Mammary epithelial cell (primary cell): ENCODE measurements at regions of chr4 and their contacts with region 1.

Region 1: DNA sequence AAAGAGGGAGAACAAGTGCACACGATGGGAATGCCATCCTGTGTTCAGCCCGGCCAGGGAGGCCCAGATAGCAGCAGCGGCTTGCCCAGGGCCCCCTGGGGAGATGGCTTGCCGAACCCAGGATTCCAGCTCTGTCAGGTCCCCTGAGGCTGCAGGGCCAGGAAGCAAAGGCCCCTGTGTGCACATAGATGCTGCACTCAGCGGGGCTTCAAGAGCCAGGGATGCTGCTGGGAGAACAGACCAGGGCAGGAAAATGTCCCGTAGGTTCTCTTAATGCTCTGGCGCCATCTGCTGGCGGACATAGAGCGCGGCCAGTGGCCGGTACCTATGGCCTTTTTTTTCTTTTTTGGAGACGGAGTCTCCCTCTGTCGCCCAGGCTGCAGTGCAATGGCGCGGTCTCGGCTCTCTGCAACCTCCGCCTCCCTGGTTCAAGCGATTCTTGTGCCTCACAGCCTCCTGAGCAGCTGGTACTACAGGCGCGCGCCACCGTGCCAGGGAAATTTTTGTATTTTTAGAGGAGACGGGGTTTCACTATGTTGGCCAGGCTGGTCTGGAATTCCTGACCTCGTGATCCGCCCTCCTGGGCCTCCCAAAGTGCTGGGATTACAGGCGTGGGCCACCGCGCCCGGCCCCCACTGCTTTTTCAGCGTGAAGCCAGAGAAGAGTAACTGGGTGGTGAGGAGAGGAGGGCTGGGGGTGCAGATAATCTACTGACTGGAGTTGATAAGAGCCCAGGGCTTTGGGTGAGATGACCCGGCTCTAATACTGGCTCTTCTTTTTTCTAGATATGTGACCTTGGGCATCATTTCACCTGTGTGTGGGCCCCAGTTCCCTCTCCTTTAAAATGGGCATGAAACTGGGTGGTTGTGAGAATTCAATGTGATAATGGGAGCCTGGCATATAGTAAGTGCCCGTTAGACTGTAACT is 22.5 kb downstream of the MED28 start:
- DNase-seq: peak; percentile 54
- H3K4me3 ChIP-seq: no peak overlapping the region
- H3K27ac ChIP-seq: no peak overlapping the region
- H3K4me1 ChIP-seq: no peaks in the 10 kb centered on the region
- H3K27me3 ChIP-seq: no peaks in the 10 kb centered on the region
- CTCF ChIP-seq: peak; percentile 74 to 89

Region 2: GRCh38 chr4:17597517-17597916 is 39.4 kb before region 1 on chr4:
- CTCF ChIA-PET with region 1: no interaction called
- dilution Hi-C with region 1: no loop called
- in situ Hi-C with region 1: no loop called
- intact Hi-C with region 1: loop called (anchors 1 kb)
- DNase-seq: peak; percentile 41
- H3K4me3 ChIP-seq: no peak overlapping the region
- H3K27ac ChIP-seq: no peak overlapping the region
- H3K4me1 ChIP-seq: no peaks in the 10 kb centered on the region
- H3K27me3 ChIP-seq: no peaks in the 10 kb centered on the region
- CTCF ChIP-seq: peak; percentile 41 to 56

Region 3: DNA sequence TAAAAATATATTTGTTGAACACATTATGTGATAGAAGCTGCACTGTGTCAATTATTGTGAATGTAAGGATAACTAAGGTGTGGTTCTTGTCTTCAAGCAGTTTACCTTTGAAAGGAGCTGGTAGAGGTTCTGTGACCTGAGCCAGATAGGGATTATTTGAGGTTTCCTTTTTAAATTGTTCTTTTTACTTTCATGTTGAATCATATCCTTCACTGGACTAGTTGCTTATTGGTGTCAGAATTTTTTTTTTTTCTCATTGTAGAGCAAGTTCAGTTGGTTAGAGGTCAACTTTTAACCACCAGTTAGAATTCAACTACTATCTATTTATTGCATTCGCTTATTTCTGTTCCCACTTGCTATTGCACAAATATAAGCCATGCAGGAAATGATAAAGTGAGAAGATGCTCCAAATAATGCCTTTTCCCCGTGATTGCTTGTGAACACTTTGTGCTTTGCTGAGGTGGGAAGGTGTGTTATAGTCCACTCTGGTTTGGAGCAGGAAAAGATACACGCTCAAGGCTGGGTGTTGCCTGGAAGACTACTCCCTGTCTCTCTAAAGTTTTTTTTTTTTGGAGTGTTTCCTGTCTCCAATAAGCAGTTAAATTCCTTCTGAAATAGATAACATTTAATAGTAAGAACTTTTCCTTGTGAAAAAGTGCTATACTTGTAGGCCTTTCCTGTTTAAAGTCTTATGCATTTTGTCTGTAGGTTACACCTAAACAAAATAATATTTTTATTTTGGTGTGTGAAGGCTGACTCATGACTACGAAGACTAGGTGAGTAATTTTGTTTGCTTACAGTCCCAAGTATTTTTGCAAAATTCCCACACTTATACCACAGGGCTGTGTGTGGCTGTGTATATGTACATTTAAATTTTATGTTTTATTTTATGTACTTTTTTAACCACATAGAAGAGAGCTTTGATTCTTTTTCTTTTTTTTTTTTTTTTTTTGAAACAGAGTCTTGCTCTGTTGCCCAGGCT is 468.4 kb after region 1 on chr4:
- CTCF ChIA-PET with region 1: no interaction called
- dilution Hi-C with region 1: no loop called
- in situ Hi-C with region 1: no loop called
- intact Hi-C with region 1: no loop called
- DNase-seq: no peak
- H3K4me3 ChIP-seq: no peak overlapping the region
- H3K27ac ChIP-seq: no peak overlapping the region
- H3K4me1 ChIP-seq: no peaks in the 10 kb centered on the region
- H3K27me3 ChIP-seq: peaks cover 3% of the 10 kb centered on the region
- CTCF ChIP-seq: no peak